ENCODE measurements at regions of chr12 and their contacts with region 1.

Region 1: DNA sequence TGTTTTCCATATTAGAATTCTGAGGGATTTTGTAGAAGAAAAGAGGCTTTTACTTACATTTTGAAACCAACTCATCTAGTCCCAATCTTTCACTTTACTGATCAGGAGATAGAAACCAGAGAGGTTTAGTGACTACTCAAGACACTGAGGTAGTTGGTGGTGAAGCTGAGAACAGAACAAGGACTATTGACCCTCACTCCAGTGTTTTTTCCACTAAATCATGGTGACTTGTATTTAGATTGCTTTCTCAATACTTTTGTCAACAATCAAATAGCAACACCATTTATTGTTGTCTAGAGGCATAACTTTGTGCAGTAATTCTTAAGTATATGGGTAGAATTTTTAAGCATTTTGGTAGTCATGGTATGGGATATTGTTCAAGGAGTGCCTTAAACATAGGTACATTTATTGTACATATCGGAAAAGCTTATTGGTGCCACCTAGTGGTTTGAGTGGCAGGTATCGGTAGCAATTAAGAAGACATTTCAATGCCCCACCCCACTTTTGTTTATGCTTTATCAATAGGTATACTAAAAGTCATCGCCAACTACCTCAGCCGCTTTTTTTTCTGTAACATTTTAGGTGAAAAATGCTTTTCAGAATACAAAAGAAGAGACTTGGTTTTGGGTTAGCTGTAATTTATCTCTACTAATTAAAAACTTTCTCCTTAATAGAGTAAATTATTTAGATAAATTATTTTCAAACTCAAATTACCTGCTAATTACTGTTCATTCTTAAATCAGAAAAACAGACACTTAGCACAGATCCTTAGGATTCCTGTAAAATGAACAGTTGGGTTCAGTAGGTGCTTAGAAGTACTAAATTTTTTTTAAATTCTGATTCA is 47.3 kb upstream of the PAWR start:
- DNase-seq: peak in 1 of 3 donors; percentile 85
- ATAC-seq: peak; percentile 79
- H3K4me3 ChIP-seq: no peak overlapping the region
- H3K4me1 ChIP-seq: peaks cover 5% of the 10 kb centered on the region
- CTCF ChIP-seq: peak; percentile 22

Region 2: GRCh38 chr12:79407671-79408622 is 330.1 kb before region 1 on chr12:
- intact Hi-C with region 1: loop called in 1 of 2 experiments (anchors 1 kb)
- DNase-seq: peak in 2 of 3 donors; percentile 57 to 79
- ATAC-seq: peak; percentile 96
- H3K4me3 ChIP-seq: no peak overlapping the region
- H3K4me1 ChIP-seq: no peaks in the 10 kb centered on the region
- CTCF ChIP-seq: peak; percentile 45

Region 3: GRCh38 chr12:79555028-79555930 is 182.8 kb before region 1 on chr12:
- intact Hi-C with region 1: loop called (anchors 5 to 10 kb)
- DNase-seq: peak in 1 of 3 donors; percentile 38
- ATAC-seq: peak; percentile 73
- H3K4me3 ChIP-seq: no peak overlapping the region
- H3K4me1 ChIP-seq: peaks cover 9% of the 10 kb centered on the region
- CTCF ChIP-seq: no peak

Region 4: DNA sequence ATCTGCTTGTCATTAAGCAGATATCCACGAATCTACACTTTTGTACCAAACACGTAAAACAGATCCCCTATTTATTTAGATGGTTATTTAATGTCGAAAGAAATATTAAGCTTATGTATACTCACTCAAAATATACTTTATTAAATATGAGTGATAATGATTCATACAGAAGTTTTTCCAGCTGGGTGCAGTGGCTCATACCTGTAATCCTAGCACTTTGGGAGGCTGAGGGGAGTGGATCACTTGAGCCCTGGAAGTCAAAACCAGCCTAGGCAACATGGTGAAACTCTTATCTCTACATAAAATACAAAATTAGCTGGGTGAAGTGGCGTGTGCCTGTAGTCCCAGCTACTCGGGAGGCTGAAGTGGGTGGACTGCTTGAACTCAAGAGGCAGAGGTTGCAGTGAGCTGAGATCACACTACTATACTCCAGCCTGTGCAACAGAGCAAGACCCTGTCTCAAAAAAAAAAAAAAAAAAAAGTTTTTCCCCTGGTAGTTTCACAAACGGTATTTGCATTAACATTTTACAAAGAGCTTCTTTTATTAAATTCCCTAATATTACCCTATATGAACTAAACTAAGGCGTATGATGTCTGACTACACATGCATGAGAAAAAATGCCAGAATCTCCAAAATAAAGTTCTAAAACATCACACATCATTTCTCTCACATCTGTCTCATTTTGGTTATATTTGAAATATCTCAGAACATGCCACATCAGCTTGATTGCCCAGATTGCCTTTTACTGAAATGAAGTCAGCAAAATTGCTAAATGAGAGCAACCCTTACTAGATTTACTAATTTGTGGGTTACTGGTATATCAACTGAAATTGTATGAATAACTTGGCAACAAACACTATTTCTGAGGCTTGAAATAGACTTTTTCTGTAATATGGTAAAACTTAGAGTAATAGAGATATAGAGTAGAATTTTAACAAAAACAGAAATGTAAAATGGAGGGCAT is 122.2 kb before region 1 on chr12:
- intact Hi-C with region 1: no loop called
- DNase-seq: no peak
- ATAC-seq: no peak
- H3K4me3 ChIP-seq: no peak overlapping the region
- H3K4me1 ChIP-seq: no peaks in the 10 kb centered on the region
- CTCF ChIP-seq: no peak